Naive thymus-derived CD4-positive, alpha-beta T cell (primary cell): ENCODE measurements at regions of chr16 and their contacts with region 1.

Region 1: GRCh38 chr16:28193530-28194423 is 18.0 kb downstream of the XPO6 start:
- DNase-seq: peak in 2 of 9 donors; percentile 45 to 55
- ATAC-seq: peak; percentile 24
- H3K4me3 ChIP-seq: peak overlapping the region; percentile 39
- H3K4me3 Mint-ChIP-seq: peak overlapping the region; percentile 73 to 87 (median 86)
- H3K27ac ChIP-seq: peak overlapping the region; percentile 77
- H3K27ac Mint-ChIP-seq: peak overlapping the region; percentile 86 to 99 (median 95)
- H3K4me1 ChIP-seq: peaks cover 43 to 75% of the 10 kb centered on the region in 2 donors
- H3K4me1 Mint-ChIP-seq: peaks cover 65 to 94% (median 84%) of the 10 kb centered on the region in 7 donors
- H3K27me3 ChIP-seq: no peaks in the 10 kb centered on the region
- H3K27me3 Mint-ChIP-seq: no peaks in the 10 kb centered on the region

Region 2: GRCh38 chr16:28181515-28181914 is 12.3 kb before region 1 on chr16:
- CTCF ChIA-PET with region 1: interaction called, 6 read pairs
- POLR2A ChIA-PET with region 1: interaction called, 14 read pairs
- intact Hi-C with region 1: loop called in 1 of 2 experiments (anchors 1 kb)
- DNase-seq: no peak
- ATAC-seq: no peak
- H3K4me3 ChIP-seq: no peak overlapping the region
- H3K4me3 Mint-ChIP-seq: peak overlapping the region; percentile 21 to 77 (median 66)
- H3K27ac ChIP-seq: peak overlapping the region; percentile 59
- H3K27ac Mint-ChIP-seq: peak overlapping the region; percentile 62 to 96 (median 89)
- H3K4me1 ChIP-seq: peaks cover 38 to 58% of the 10 kb centered on the region in 2 donors
- H3K4me1 Mint-ChIP-seq: peaks cover 66 to 97% (median 86%) of the 10 kb centered on the region in 7 donors
- H3K27me3 ChIP-seq: no peaks in the 10 kb centered on the region
- H3K27me3 Mint-ChIP-seq: no peaks in the 10 kb centered on the region

Region 3: GRCh38 chr16:28258567-28258966 is 64.8 kb after region 1 on chr16:
- CTCF ChIA-PET with region 1: no interaction called
- POLR2A ChIA-PET with region 1: no interaction called
- intact Hi-C with region 1: no loop called
- DNase-seq: no peak
- ATAC-seq: no peak
- H3K4me3 ChIP-seq: no peak overlapping the region
- H3K4me3 Mint-ChIP-seq: no peak overlapping the region
- H3K27ac ChIP-seq: no peak overlapping the region
- H3K27ac Mint-ChIP-seq: no peak overlapping the region
- H3K4me1 ChIP-seq: peaks cover 0 to 9% of the 10 kb centered on the region in 2 donors
- H3K4me1 Mint-ChIP-seq: peaks cover 5 to 22% (median 12%) of the 10 kb centered on the region in 7 donors
- H3K27me3 ChIP-seq: no peaks in the 10 kb centered on the region
- H3K27me3 Mint-ChIP-seq: peaks cover 0 to 7% (median 4%) of the 10 kb centered on the region in 5 donors